Activated CD4-positive, alpha-beta T cell treated with anti-CD3 and anti-CD28 coated beads for 36 hours (primary cell): ENCODE measurements at regions of chr12 and their contacts with region 1.

Region 1: GRCh38 chr12:31117203-31118011 is 43.7 kb downstream of the DDX11 start:
- DNase-seq: peak; percentile 78
- ATAC-seq: peak; percentile 77
- H3K4me3 Mint-ChIP-seq: peak overlapping the region; percentile 59
- H3K27ac Mint-ChIP-seq: no peak overlapping the region
- H3K4me1 Mint-ChIP-seq: peaks cover 3% of the 10 kb centered on the region
- H3K27me3 Mint-ChIP-seq: peaks cover 15% of the 10 kb centered on the region

Region 2: DNA sequence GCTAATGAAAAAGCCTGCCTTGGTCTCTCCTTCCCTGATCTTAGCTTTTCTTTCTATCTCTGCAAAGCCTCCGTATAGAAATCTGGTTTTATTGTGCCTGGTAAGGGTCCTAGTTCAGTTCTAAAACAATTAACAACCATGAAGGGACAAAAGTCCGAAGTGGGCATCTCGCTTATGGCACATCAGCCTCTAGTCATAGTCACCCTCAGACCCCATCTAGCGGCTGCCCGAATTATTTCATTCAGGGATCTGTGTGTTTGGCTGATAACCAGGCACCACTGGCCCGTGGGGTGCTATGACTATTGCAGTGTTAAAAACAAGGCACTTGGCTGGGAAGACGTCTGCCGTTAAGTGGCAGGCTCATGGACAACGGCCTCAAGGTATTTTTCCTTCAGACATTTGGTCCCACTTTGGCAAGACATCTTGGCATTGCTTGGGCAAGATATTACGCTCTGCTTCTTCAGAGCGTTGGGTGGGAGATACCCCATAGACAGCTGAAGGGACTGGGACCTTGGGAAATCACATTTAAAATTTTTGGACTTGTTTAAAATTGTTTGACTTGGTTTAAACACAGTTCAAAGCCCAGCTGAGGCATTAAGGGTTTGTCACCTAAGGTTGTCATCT is 121.5 kb after region 1 on chr12:
- CTCF ChIA-PET with region 1: interaction called, 3 read pairs
- POLR2A ChIA-PET with region 1: no interaction called
- intact Hi-C with region 1: loop called (anchors 1 kb)
- DNase-seq: peak; percentile 81
- ATAC-seq: peak; percentile 87
- H3K4me3 Mint-ChIP-seq: no peak overlapping the region
- H3K27ac Mint-ChIP-seq: no peak overlapping the region
- H3K4me1 Mint-ChIP-seq: no peaks in the 10 kb centered on the region
- H3K27me3 Mint-ChIP-seq: peaks cover 20% of the 10 kb centered on the region

Region 3: GRCh38 chr12:31362759-31363415 is 245.5 kb after region 1 on chr12:
- CTCF ChIA-PET with region 1: no interaction called
- POLR2A ChIA-PET with region 1: no interaction called
- intact Hi-C with region 1: loop called in 1 of 2 experiments (anchors 5 kb)
- DNase-seq: peak; percentile 64
- ATAC-seq: peak; percentile 85
- H3K4me3 Mint-ChIP-seq: peak overlapping the region; percentile 45
- H3K27ac Mint-ChIP-seq: peak overlapping the region; percentile 70
- H3K4me1 Mint-ChIP-seq: peaks cover 14% of the 10 kb centered on the region
- H3K27me3 Mint-ChIP-seq: no peaks in the 10 kb centered on the region

Region 4: GRCh38 chr12:31629756-31630732 is 512.6 kb after region 1 on chr12:
- CTCF ChIA-PET with region 1: no interaction called
- POLR2A ChIA-PET with region 1: no interaction called
- intact Hi-C with region 1: loop called in 1 of 2 experiments (anchors 10 kb)
- DNase-seq: no peak
- ATAC-seq: no peak
- H3K4me3 Mint-ChIP-seq: no peak overlapping the region
- H3K27ac Mint-ChIP-seq: no peak overlapping the region
- H3K4me1 Mint-ChIP-seq: peaks cover 3% of the 10 kb centered on the region
- H3K27me3 Mint-ChIP-seq: no peaks in the 10 kb centered on the region